CD4-positive, alpha-beta T cell (primary cell): ENCODE measurements at regions of chr7 and their contacts with region 1.

Region 1: GRCh38 chr7:40726562-40726961 is 591.8 kb downstream of the SUGCT start:
- DNase-seq: no peak
- ATAC-seq: no peak
- H3K4me3 ChIP-seq: no peak overlapping the region
- H3K4me3 Mint-ChIP-seq: no peak overlapping the region
- H3K27ac ChIP-seq: no peak overlapping the region
- H3K27ac Mint-ChIP-seq: no peak overlapping the region
- H3K4me1 ChIP-seq: no peaks in the 10 kb centered on the region
- H3K4me1 Mint-ChIP-seq: no peaks in the 10 kb centered on the region
- H3K27me3 ChIP-seq: no peaks in the 10 kb centered on the region
- H3K27me3 Mint-ChIP-seq: no peaks in the 10 kb centered on the region
- CTCF ChIP-seq: no peak

Region 2: DNA sequence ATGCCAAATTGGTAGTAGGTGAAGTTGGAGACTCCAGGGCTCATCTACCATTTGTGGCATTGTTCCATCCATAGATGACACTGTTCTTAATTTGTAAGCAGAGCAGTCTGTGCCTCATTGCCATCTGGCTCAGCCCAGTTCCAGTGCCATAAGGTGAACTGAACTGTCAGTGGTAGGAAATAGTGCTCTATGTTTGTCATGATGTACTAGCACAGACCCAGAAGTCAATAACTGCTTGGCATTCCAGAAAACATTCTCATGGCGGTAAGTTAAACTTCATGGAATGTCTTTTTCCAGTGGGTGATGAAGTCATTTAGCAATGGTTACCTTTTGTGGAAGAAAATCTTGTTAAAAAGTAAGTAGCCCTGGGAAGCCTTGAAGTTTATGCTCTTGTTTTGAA is 289.1 kb before region 1 on chr7:
- CTCF ChIA-PET with region 1: no interaction called
- POLR2A ChIA-PET with region 1: no interaction called
- intact Hi-C with region 1: loop called in 1 of 2 experiments (anchors 5 kb)
- DNase-seq: no peak
- ATAC-seq: no peak
- H3K4me3 ChIP-seq: no peak overlapping the region
- H3K4me3 Mint-ChIP-seq: no peak overlapping the region
- H3K27ac ChIP-seq: no peak overlapping the region
- H3K27ac Mint-ChIP-seq: no peak overlapping the region
- H3K4me1 ChIP-seq: no peaks in the 10 kb centered on the region
- H3K4me1 Mint-ChIP-seq: no peaks in the 10 kb centered on the region
- H3K27me3 ChIP-seq: no peaks in the 10 kb centered on the region
- H3K27me3 Mint-ChIP-seq: no peaks in the 10 kb centered on the region
- CTCF ChIP-seq: no peak